Thyroid gland (tissue), 4 donors: ENCODE measurements at regions of chr3 and their contacts with region 1.

Region 1: DNA sequence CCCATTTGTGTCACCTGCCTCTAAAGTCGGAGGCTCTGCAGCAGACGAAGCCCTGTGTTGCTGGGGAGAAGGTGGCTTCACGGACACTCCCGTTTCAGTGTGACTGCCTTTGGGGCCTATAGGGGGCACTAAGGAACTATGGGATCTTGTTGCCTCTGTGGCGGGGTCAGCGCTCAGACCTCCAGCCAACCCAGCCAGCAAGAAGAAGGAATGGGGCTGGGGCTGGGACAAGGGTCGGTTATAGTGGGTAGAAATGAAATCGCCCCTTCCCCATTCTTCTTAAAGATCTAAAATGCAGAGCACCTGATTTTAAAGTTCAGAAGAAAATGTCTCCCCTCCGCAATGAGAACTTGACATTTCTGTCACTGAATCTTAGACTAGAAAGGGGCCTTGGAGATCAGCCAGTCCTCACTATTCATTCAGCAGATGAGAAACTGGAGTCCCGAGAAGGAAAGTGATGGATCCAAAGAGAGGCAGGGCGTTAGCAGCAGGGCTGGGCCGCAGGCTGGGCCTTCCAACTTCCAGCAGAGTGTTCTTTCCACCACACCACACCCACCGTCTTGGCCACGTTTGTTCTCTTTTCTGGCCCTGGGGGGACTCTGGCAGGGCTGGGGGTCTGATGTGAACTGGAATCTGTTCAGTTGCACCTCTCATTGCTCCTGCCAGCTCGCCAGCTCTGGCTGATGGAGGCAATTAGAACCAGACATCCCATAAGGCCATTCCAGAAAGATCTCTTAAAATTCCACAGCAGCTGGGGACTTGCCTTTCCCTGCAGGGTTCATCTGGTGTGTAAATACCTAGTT is 195.4 kb downstream of the OPA1 start:
- DNase-seq: peak; percentile 63 to 66
- H3K4me3 ChIP-seq: no peak overlapping the region
- H3K27ac ChIP-seq: no peak overlapping the region
- H3K4me1 ChIP-seq: peaks cover 5 to 19% of the 10 kb centered on the region in 2 donors
- H3K27me3 ChIP-seq: no peaks in the 10 kb centered on the region
- CTCF ChIP-seq: peak; percentile 55 to 83 (median 70)
- POLR2A ChIP-seq: no peak

Region 2: GRCh38 chr3:193997228-193998122 is 209.1 kb after region 1 on chr3:
- intact Hi-C with region 1: loop called (anchors 10 kb)
- DNase-seq: peak; percentile 84 to 87
- H3K4me3 ChIP-seq: no peak overlapping the region
- H3K27ac ChIP-seq: peak overlapping the region; percentile 57 to 80 (median 61)
- H3K4me1 ChIP-seq: peaks cover 21 to 24% of the 10 kb centered on the region in 2 donors
- H3K27me3 ChIP-seq: no peaks in the 10 kb centered on the region
- CTCF ChIP-seq: no peak
- POLR2A ChIP-seq: peak in 1 of 2 donors; percentile 43